PC-3 (cell line): ENCODE measurements at regions of chr15 and their contacts with region 1.

Region 1: GRCh38 chr15:42273102-42273899 is at the starts of genes GANC and TMEM87A:
- DNase-seq: peak; percentile 99
- ATAC-seq: peak; percentile 82
- H3K4me3 ChIP-seq: peak within 1 kb of the TSS; percentile 77
- H3K27ac ChIP-seq: peak within 1 kb of the TSS; percentile 94
- H3K4me1 ChIP-seq: peaks cover 41% of the 10 kb centered on the region
- H3K27me3 ChIP-seq: no peaks in the 10 kb centered on the region
- CTCF ChIP-seq: no peak
- total RNA-seq, gene GANC: 8.2 and 12.4 TPM in 2 replicates
- total RNA-seq, gene TMEM87A: 55.8 and 56.3 TPM in 2 replicates

Region 2: DNA sequence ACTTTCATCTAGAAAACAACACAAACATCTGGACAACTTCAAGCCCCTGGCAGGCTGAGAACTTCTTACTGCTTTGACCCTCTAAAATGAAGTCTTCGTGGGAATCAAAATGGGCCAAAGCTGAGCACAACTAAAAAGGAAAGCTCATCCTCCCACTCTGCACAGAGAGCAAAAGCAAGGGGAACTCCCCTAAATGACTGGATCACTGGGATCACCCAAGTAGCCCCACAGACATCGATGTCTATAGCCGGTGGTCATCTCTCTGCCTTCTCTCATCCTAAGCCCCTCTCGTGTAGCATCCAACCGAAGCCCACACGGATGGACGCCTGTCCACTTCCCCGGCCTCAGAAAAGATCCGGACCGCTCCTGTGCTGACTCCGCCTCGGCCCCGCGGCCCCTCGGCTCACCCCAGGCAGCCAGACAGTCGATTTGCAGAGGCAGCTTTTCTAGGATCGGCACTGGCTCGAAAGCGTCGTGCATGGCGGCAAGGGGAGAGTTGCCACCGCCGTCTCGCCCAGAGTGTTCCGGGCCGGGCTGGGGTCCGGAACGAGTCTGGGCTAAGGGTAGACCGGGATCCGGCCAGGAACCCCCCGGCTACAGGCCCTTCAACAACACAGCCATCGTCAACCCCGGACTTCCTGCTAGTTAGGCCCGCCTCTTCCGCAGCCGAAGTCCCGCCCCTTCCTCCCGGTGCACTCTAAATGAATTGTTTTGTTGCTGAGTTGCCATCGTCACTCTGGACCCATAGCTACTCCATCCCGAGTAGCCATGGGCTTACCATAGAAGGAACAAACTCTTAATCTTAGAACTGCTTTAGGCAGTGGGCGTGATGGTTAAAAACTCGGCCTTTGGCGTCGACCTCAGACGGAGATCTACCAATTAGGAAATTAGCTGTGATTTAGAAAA is 65.4 kb before region 1 on chr15 and contains the start of gene VPS39:
- CTCF ChIA-PET with region 1: no interaction called
- POLR2A ChIA-PET with region 1: interaction called, 4 read pairs
- intact Hi-C with region 1: loop called (anchors 2 kb)
- DNase-seq: peak; percentile 83
- ATAC-seq: peak; percentile 95
- H3K4me3 ChIP-seq: peak within 1 kb of the TSS; percentile 98
- H3K27ac ChIP-seq: peak within 1 kb of the TSS; percentile 22
- H3K4me1 ChIP-seq: peaks cover 24% of the 10 kb centered on the region
- H3K27me3 ChIP-seq: no peaks in the 10 kb centered on the region
- CTCF ChIP-seq: no peak
- total RNA-seq, gene VPS39: 28.5 and 46.4 TPM in 2 replicates

Region 3: DNA sequence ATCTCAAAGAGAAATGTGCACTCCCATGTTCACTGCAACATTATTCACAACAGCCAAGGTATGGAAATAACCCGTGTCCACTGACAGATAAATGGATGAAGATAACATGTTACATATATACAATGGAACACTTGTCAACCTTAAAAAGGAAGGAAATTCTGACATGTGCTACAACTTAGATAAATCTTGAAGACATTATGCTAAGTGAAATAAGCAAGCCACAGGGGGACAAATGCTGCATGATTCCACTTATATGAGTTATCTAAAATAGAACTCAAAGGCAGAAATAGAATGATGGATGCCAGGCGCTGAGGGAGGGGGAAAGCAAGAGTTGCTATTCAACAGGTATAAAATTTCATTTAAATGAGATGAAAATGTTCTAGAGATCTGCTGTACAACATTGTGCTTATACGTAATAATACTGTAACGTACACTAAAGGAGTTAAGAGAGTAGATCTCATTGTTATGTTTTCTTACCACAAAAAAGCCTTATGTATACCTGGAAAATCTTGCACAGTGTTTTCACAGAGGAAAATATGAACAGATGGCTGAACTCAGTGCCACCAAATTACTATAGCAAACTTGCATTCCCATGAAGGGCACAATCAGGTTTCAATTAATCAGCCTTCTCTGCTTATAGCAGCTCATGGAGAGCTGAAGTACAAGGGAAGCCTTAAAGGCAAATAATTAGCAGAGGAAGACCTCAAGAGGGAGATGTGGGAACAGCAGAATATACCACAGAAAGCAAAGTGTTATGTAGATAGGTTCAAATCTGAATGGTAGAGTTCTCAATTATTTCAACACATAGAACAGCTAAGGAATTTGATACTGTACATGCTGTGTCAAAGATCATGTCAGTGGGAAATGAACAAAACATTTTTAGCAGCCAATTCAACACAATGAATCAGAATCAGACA is 57.1 kb before region 1 on chr15:
- CTCF ChIA-PET with region 1: no interaction called
- POLR2A ChIA-PET with region 1: no interaction called
- intact Hi-C with region 1: loop called (anchors 2 kb)
- DNase-seq: peak; percentile 18
- ATAC-seq: peak; percentile 58
- H3K4me3 ChIP-seq: no peak overlapping the region
- H3K27ac ChIP-seq: no peak overlapping the region
- H3K4me1 ChIP-seq: no peaks in the 10 kb centered on the region
- H3K27me3 ChIP-seq: no peaks in the 10 kb centered on the region
- CTCF ChIP-seq: peak; percentile 33; the same call in 1 of the 2 replicates

Region 4: GRCh38 chr15:42240814-42241213 is 32.5 kb before region 1 on chr15:
- CTCF ChIA-PET with region 1: no interaction called
- POLR2A ChIA-PET with region 1: interaction called, 3 read pairs
- intact Hi-C with region 1: loop called (anchors 1 kb)
- DNase-seq: no peak
- ATAC-seq: no peak
- H3K4me3 ChIP-seq: no peak overlapping the region
- H3K27ac ChIP-seq: no peak overlapping the region
- H3K4me1 ChIP-seq: peaks cover 20% of the 10 kb centered on the region
- H3K27me3 ChIP-seq: no peaks in the 10 kb centered on the region
- CTCF ChIP-seq: no peak

Region 5: DNA sequence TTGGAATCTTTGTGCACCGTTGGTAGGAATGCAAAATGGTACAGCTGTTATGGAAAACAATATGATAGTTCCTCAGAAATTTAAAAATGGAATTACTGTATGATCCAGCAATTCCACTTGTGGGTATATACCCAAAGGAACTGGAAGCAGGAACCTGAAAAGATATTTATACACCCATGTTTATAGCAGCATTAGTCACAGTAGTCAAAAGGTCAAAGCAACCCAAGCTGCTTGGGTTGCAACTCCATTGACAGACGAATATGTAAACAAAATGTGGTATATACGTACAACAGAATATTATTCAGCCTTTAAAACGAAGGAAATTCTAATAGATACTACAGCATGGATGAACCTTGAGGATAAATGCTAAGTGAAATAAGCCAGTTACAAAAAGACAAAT is 51.0 kb after region 1 on chr15:
- CTCF ChIA-PET with region 1: no interaction called
- POLR2A ChIA-PET with region 1: no interaction called
- intact Hi-C with region 1: loop called (anchors 5 kb)
- DNase-seq: peak; percentile 77
- ATAC-seq: peak; percentile 99
- H3K4me3 ChIP-seq: no peak overlapping the region
- H3K27ac ChIP-seq: peak overlapping the region; percentile 27
- H3K4me1 ChIP-seq: peaks cover 13% of the 10 kb centered on the region
- H3K27me3 ChIP-seq: no peaks in the 10 kb centered on the region
- CTCF ChIP-seq: no peak

Region 6: DNA sequence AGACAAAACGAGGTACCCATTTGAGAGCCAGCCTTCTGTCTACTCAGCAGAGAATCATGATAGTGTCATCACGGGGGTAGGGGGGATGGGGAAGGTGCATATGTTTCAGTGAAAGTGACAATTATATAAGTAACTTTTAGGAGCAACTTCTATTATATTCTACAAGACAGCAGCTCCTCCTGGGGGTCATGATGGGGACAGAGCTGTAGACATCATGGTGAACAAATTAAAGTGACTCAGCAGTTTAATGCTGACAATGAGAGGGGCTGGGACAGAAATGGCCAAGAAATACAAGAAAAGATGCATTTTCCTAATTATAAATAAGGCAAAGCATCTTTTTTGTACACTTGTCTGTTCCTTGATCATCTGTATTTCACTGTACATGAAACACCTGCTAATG is 97.8 kb after region 1 on chr15:
- CTCF ChIA-PET with region 1: no interaction called
- POLR2A ChIA-PET with region 1: no interaction called
- intact Hi-C with region 1: loop called (anchors 2 kb)
- DNase-seq: peak; percentile 69
- ATAC-seq: peak; percentile 87
- H3K4me3 ChIP-seq: no peak overlapping the region
- H3K27ac ChIP-seq: peak overlapping the region; percentile 41
- H3K4me1 ChIP-seq: 0 out of 2 replicates have a peak, but pooled peaks cover 8% of the 10 kb centered on the region
- H3K27me3 ChIP-seq: no peaks in the 10 kb centered on the region
- CTCF ChIP-seq: peak; percentile 68

Region 7: DNA sequence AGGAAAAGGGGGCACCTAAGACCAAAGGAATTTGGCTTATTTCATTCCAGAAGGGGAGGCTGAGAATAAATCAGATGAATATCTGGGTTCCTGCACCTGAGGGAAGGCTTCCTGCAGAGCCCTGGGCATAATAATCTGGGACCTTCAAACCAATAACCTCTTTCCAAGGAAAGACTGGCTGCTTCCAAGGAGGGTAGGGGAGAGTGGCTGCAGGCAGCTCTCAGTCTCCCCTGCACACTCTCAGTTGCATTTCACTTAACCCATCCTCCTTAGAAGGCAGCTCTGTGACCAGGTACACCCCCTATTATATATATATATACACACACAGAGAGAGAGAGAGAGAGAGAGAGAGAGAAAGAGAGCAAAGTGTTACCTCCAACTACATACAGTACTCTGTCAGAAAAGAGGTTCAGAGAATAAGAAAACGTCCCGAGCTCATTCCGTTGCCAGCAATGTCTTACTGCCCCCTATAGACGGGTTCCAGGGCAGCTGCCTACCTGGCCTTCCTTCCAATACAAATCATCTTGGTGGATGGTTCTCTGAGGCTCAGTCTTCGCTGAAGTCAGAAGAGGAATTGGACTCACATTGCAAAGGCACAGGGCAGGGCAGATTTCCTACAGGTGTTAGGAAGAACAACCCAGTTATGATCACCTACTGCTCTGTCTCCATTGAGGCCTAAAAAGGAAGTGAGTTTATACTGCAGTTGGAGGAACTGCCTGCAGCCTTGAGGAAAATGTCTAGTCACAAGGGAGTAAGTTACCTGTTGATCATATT is 112.1 kb after region 1 on chr15:
- CTCF ChIA-PET with region 1: no interaction called
- POLR2A ChIA-PET with region 1: no interaction called
- intact Hi-C with region 1: loop called (anchors 5 kb)
- DNase-seq: peak; percentile 74
- ATAC-seq: peak; percentile 97
- H3K4me3 ChIP-seq: no peak overlapping the region
- H3K27ac ChIP-seq: no peak overlapping the region
- H3K4me1 ChIP-seq: no peaks in the 10 kb centered on the region
- H3K27me3 ChIP-seq: no peaks in the 10 kb centered on the region
- CTCF ChIP-seq: peak; percentile 89